T-cell (primary cell): ENCODE measurements at regions of chr22 and their contacts with region 1.

Region 1: GRCh38 chr22:50507991-50508884 is at the start of gene NCAPH2:
- DNase-seq: peak in 30 of 35 experiments; percentile 93 to 98 (median 96)
- ATAC-seq: peak; percentile 75 to 82 (median 79)
- H3K4me3 ChIP-seq: peak within 1 kb of the TSS; percentile 67 to 84
- H3K4me3 Mint-ChIP-seq: peak within 1 kb of the TSS; percentile 93 to 94 (median 93)
- H3K27ac ChIP-seq: peak within 1 kb of the TSS; percentile 84
- H3K27ac Mint-ChIP-seq: peak within 1 kb of the TSS; percentile 95 to 97
- H3K4me1 ChIP-seq: peaks cover 15 to 30% of the 10 kb centered on the region in 2 experiments
- H3K4me1 Mint-ChIP-seq: peaks cover 23 to 28% (median 27%) of the 10 kb centered on the region in 3 donors
- H3K27me3 ChIP-seq: no peaks in the 10 kb centered on the region
- H3K27me3 Mint-ChIP-seq: no peaks in the 10 kb centered on the region
- total RNA-seq, gene NCAPH2: 80.1 to 110 (median 94.6) TPM

Region 2: GRCh38 chr22:50446708-50447575 is 61.3 kb before region 1 on chr22:
- CTCF ChIA-PET with region 1: no interaction called
- POLR2A ChIA-PET with region 1: no interaction called
- DNase-seq: no peak
- ATAC-seq: no peak
- H3K4me3 ChIP-seq: no peak overlapping the region
- H3K4me3 Mint-ChIP-seq: no peak overlapping the region
- H3K27ac ChIP-seq: no peak overlapping the region
- H3K27ac Mint-ChIP-seq: no peak overlapping the region
- H3K4me1 ChIP-seq: peaks cover 8 to 55% of the 10 kb centered on the region in 2 experiments
- H3K4me1 Mint-ChIP-seq: peaks cover 25 to 33% (median 31%) of the 10 kb centered on the region in 3 donors
- H3K27me3 ChIP-seq: no peaks in the 10 kb centered on the region
- H3K27me3 Mint-ChIP-seq: no peaks in the 10 kb centered on the region

Region 3: GRCh38 chr22:50469377-50470305 is 38.6 kb before region 1 on chr22:
- CTCF ChIA-PET with region 1: interaction called in 1 of 2 experiments, 10 read pairs
- POLR2A ChIA-PET with region 1: no interaction called
- DNase-seq: peak; percentile 93 to 99 (median 98)
- ATAC-seq: peak; percentile 83 to 89 (median 86)
- H3K4me3 ChIP-seq: peak overlapping the region; percentile 44 to 69
- H3K4me3 Mint-ChIP-seq: peak overlapping the region; percentile 72 to 91 (median 75)
- H3K27ac ChIP-seq: peak overlapping the region; percentile 82
- H3K27ac Mint-ChIP-seq: peak overlapping the region; percentile 97 to 98
- H3K4me1 ChIP-seq: peaks cover 42 to 85% of the 10 kb centered on the region in 2 experiments
- H3K4me1 Mint-ChIP-seq: peaks cover 64 to 69% (median 67%) of the 10 kb centered on the region in 3 donors
- H3K27me3 ChIP-seq: no peaks in the 10 kb centered on the region
- H3K27me3 Mint-ChIP-seq: no peaks in the 10 kb centered on the region

Region 4: GRCh38 chr22:50481440-50482106 is 26.7 kb before region 1 on chr22 and contains the start of gene ADM2:
- CTCF ChIA-PET with region 1: no interaction called
- POLR2A ChIA-PET with region 1: no interaction called
- DNase-seq: peak in 31 of 35 experiments; percentile 28 to 73 (median 53)
- ATAC-seq: peak; percentile 82 to 95 (median 86)
- H3K4me3 ChIP-seq: peak within 1 kb of the TSS; percentile 46 to 49
- H3K4me3 Mint-ChIP-seq: peak within 1 kb of the TSS; percentile 73 to 75 (median 74)
- H3K27ac ChIP-seq: no peak within 1 kb of the TSS
- H3K27ac Mint-ChIP-seq: peak within 1 kb of the TSS in 1 of 2 donors; percentile 22
- H3K4me1 ChIP-seq: peaks cover 6 to 24% of the 10 kb centered on the region in 2 experiments
- H3K4me1 Mint-ChIP-seq: peaks cover 5 to 13% (median 10%) of the 10 kb centered on the region in 3 donors
- H3K27me3 ChIP-seq: peaks cover 0 to 35% of the 10 kb centered on the region in 2 experiments
- H3K27me3 Mint-ChIP-seq: peaks cover 0 to 5% of the 10 kb centered on the region in 2 donors
- total RNA-seq, gene ADM2: 1.5 to 11.3 (median 10.7) TPM

Region 5: DNA sequence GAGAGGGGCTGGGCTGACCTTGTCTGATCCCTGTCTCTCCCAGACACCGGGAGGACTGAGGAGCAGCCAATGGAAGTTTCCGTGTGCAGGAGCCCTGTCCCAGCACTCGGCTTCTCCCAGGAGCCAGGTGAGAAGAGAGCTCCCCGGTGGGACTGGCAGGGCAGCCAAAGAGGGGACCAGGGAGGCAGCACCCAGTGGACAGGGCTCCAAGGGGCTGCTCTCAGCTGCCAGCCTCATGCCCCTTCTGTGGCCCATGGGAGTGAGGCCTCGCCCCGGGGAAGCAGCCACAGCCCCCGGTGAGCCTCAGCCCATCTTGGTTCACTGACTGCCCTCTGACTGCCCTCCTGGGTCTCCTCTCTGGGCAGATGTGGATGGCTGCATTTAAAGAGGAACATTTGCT is 10.4 kb after region 1 on chr22:
- CTCF ChIA-PET with region 1: no interaction called
- POLR2A ChIA-PET with region 1: no interaction called
- DNase-seq: no peak
- ATAC-seq: no peak
- H3K4me3 ChIP-seq: no peak overlapping the region
- H3K4me3 Mint-ChIP-seq: no peak overlapping the region
- H3K27ac ChIP-seq: no peak overlapping the region
- H3K27ac Mint-ChIP-seq: no peak overlapping the region
- H3K4me1 ChIP-seq: no peaks in the 10 kb centered on the region
- H3K4me1 Mint-ChIP-seq: peaks cover 12 to 17% (median 12%) of the 10 kb centered on the region in 3 donors
- H3K27me3 ChIP-seq: no peaks in the 10 kb centered on the region
- H3K27me3 Mint-ChIP-seq: no peaks in the 10 kb centered on the region

Region 6: GRCh38 chr22:50537765-50538164 is 29.5 kb after region 1 on chr22:
- CTCF ChIA-PET with region 1: interaction called in 1 of 2 experiments, 8 read pairs
- POLR2A ChIA-PET with region 1: interaction called in 1 of 2 experiments, 16 read pairs
- DNase-seq: no peak
- ATAC-seq: no peak
- H3K4me3 ChIP-seq: no peak overlapping the region
- H3K4me3 Mint-ChIP-seq: peak overlapping the region; percentile 9 to 50 (median 25)
- H3K27ac ChIP-seq: peak overlapping the region; percentile 98
- H3K27ac Mint-ChIP-seq: peak overlapping the region; percentile 82 to 99
- H3K4me1 ChIP-seq: peaks cover 6 to 23% of the 10 kb centered on the region in 2 experiments
- H3K4me1 Mint-ChIP-seq: peaks cover 47 to 69% (median 64%) of the 10 kb centered on the region in 3 donors
- H3K27me3 ChIP-seq: no peaks in the 10 kb centered on the region
- H3K27me3 Mint-ChIP-seq: no peaks in the 10 kb centered on the region

Region 7: DNA sequence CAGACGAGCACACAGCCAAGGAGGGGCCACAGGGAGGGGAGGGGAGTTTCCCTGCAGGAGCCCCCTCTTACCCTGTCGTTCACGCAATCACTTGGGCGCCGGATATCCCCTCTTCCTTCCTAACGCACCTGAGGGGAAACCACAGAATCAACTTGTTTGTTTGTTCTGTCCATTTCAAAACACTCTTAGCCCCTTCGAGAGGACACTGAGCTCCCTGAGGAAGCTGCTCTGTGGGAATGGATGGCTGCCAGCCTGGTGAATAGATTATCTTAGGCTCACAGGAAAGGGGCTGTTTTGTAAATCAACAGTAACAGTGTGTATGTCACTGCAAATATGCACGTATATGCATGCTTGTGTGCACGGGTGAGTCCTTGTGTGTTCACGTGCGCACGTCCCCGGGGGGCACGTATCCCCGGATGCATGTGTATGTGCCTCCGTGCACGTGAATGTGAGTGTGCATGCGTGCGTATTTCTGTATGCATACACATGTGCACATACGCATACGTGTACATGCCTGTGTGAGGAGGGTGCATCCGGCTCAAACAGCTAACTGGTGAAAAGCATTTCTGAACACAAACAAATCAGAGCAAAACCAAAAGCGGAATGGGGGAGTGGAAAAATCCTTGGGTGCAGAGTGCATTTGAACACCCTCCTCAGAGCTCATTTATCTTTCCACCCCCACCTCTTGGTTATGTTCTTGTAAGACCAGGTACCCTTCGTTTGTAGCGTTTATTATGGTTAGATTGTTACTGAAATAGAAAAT is 112.5 kb after region 1 on chr22:
- CTCF ChIA-PET with region 1: interaction called, 5 to 15 read pairs
- POLR2A ChIA-PET with region 1: interaction called in 1 of 2 experiments, 6 read pairs
- DNase-seq: peak; percentile 44 to 97 (median 91)
- ATAC-seq: peak; percentile 67 to 77 (median 73)
- H3K4me3 ChIP-seq: peak overlapping the region; percentile 60 to 77
- H3K4me3 Mint-ChIP-seq: peak overlapping the region; percentile 88 to 90 (median 90)
- H3K27ac ChIP-seq: peak overlapping the region; percentile 96
- H3K27ac Mint-ChIP-seq: peak overlapping the region; percentile 97 to 99
- H3K4me1 ChIP-seq: peaks cover 26 to 40% of the 10 kb centered on the region in 2 experiments
- H3K4me1 Mint-ChIP-seq: peaks cover 36 to 40% (median 39%) of the 10 kb centered on the region in 3 donors
- H3K27me3 ChIP-seq: no peaks in the 10 kb centered on the region
- H3K27me3 Mint-ChIP-seq: no peaks in the 10 kb centered on the region